Activated CD8-positive, alpha-beta T cell treated with anti-CD3 and anti-CD28 coated beads for 36 hours (primary cell): ENCODE measurements at regions of chr22 and their contacts with region 1.

Region 1: DNA sequence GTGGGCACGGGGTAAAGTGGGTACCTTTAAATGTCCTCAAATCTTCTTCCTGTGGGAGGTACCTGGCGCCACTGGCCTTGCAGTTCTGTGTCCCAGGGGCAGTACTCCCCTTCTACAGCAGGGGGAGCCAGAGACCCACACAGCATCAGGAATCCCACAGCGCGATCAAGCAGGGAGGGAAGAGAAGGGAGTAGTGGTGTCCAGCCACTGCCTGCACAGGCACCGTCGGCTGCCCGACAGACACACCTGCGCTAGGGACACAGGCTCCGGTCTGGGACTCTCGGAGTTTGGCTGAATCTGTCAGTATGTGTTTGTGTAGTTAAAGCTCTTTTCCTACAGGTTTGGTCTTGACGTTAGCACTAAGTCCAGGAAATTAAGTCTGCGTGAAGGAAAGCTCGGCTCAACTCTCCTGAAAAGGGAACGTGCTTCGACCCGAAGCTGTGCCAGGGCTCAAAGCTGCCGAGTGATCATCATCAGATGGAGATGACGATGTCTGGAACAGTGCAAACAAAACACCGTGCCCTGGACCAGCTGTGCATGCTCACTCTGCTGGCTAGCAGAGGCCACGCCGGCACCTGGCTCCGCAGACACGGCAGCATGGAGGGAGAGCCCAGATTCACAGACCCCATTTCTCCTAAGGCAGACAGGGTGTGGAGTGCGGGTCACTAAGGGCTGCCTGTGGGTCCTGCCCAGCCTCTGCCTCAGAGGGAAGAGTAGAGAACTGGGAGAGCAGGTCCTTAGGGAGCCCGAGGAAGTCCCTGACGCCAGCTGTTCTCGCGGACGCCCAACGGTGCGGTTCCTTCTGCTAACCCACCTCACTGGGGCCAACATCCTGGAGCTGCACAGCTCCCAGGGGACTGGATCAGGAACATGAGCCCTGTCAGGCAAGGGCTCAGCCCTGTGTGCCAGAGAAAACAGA is 56.0 kb upstream of the BID start:
- DNase-seq: peak; percentile 88
- ATAC-seq: peak; percentile 99
- H3K4me3 Mint-ChIP-seq: no peak overlapping the region
- H3K27ac Mint-ChIP-seq: no peak overlapping the region
- H3K4me1 Mint-ChIP-seq: peaks cover 4% of the 10 kb centered on the region
- H3K27me3 Mint-ChIP-seq: no peaks in the 10 kb centered on the region
- CTCF ChIP-seq: peak; percentile 99

Region 2: DNA sequence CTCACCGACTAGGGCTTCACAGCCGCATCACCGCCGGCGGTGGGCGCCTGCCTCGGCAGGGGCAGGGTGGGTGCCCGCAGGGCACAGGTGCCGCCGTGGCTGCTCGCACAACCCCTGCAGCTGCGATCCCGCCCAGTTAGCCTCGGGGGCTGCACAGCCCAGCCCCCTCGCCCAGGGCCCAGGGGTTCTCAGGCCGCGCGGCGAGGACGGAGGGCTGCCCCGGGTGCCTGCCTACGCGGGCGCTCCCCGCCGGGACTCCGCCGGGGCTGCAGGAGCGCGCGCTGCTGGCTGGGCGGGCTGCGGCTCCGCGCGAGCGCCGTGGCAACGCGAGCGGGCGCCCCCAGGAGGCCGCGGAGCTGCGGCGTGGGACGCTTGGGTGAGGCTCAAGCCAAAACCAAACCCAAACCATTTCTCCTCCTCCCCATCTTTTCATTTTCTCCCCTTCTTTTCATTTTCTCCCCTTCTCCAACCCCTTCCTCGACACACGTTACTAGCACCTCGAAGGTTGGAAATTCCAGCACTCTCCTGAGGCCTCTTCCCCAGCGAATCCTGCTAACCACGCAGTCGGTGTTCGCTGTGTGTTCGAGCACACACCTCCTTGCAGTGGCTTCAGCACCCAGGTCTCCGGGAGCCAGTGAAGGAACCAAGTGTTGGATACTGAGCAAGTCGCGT is 194.1 kb after region 1 on chr22 and contains the start of gene MICAL3:
- CTCF ChIA-PET with region 1: interaction called, 31 read pairs
- POLR2A ChIA-PET with region 1: interaction called, 3 read pairs
- intact Hi-C with region 1: loop called (anchors 10 kb)
- DNase-seq: peak; percentile 68
- ATAC-seq: peak; percentile 97
- H3K4me3 Mint-ChIP-seq: peak within 1 kb of the TSS; percentile 69
- H3K27ac Mint-ChIP-seq: no peak within 1 kb of the TSS
- H3K4me1 Mint-ChIP-seq: peaks cover 6% of the 10 kb centered on the region
- H3K27me3 Mint-ChIP-seq: peaks cover 39% of the 10 kb centered on the region
- CTCF ChIP-seq: peak; percentile 51
- total RNA-seq, gene MICAL3: 31.6 to 32.4 TPM